AG04450 (cell line): ENCODE measurements at regions of chr3 and their contacts with region 1.

Region 1: GRCh38 chr3:59857589-59858346 is 807.9 kb upstream of the CFAP20DC start:
- DNase-seq: peak; percentile 65
- H3K4me3 ChIP-seq: no peak overlapping the region
- H3K27ac ChIP-seq: no peak overlapping the region
- H3K27me3 ChIP-seq: no peaks in the 10 kb centered on the region
- CTCF ChIP-seq: peak; percentile 91

Region 2: GRCh38 chr3:59575113-59576001 is 282.4 kb before region 1 on chr3:
- CTCF ChIA-PET with region 1: interaction called, 99 read pairs
- POLR2A ChIA-PET with region 1: interaction called, 10 read pairs
- DNase-seq: peak; percentile 57
- H3K4me3 ChIP-seq: no peak overlapping the region
- H3K27ac ChIP-seq: no peak overlapping the region
- H3K27me3 ChIP-seq: no peaks in the 10 kb centered on the region
- CTCF ChIP-seq: peak; percentile 93

Region 3: DNA sequence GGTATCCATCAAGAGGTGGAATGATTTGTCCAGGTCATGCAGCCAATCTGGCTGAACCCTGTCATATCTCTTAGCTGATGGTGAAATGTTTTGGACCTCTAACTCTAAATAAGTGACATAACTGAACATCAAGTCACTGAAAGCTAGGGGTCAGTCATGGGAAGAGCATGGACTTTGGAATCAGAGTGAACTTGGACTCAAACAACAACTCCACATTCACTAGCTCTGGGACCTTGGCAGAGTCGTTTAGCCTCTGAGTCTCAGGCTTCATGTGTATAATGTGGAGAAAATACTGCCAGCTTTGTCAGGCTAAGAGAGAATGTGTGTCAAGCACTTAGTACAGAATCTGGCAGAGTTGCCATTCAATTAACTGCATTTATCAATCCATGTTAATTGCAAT is 250.1 kb before region 1 on chr3:
- CTCF ChIA-PET with region 1: interaction called, 11 read pairs
- POLR2A ChIA-PET with region 1: no interaction called
- DNase-seq: no peak
- H3K4me3 ChIP-seq: no peak overlapping the region
- H3K27ac ChIP-seq: no peak overlapping the region
- H3K27me3 ChIP-seq: peaks cover 2% of the 10 kb centered on the region
- CTCF ChIP-seq: peak; percentile 17; the same call in 1 of the 2 replicates

Region 4: DNA sequence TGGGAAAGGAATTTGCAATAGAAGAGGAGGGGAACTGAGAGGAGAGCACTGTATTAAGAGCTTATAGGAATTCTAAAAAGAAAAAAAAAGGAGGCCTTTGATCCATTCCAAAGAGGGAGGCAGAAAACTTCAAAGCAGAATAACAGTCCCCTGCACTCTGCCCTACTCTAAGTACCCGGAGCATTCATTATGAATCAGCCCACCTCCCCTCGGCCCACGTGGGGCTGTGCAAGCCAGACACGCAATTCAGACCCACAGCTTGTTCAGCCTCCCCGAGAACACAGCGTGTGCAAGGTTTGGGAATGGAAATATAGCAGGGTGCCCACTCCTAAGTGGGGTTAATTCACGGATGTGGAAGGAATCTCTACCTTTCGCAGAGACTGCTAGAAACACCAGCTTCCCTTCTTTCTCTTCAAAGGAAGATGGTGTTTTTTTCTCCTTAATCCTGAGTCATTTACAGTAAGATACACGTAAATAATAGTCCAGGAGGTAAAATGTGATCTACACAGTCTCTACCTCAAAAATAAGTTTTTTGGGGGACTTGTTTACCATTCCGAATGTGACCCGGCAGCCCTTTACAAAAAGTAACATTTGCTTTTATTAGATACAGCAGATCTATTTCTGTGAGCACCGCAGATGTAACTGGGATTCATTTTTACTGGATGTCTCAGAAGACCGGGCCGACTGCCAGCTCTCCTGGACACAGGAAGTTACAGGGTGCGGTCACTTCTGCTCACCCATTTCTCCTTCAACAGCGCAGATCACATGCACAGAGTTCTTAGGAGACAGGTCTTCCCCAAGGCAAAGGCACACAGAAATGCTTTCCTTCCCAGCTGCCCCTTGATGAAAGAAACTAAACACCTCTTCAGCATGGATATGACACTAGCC is 39.5 kb before region 1 on chr3:
- CTCF ChIA-PET with region 1: interaction called, 10 read pairs
- POLR2A ChIA-PET with region 1: no interaction called
- DNase-seq: peak; percentile 88
- H3K4me3 ChIP-seq: peak overlapping the region; percentile 5; the same call in 1 of the 2 replicates
- H3K27ac ChIP-seq: peak overlapping the region; percentile 89
- H3K27me3 ChIP-seq: no peaks in the 10 kb centered on the region
- CTCF ChIP-seq: no peak

Region 5: GRCh38 chr3:59968513-59969045 is 110.8 kb after region 1 on chr3:
- CTCF ChIA-PET with region 1: no interaction called
- POLR2A ChIA-PET with region 1: no interaction called
- DNase-seq: no peak
- H3K4me3 ChIP-seq: no peak overlapping the region
- H3K27ac ChIP-seq: no peak overlapping the region
- H3K27me3 ChIP-seq: peaks cover 3% of the 10 kb centered on the region
- CTCF ChIP-seq: no peak